ENCODE measurements at regions of chr6 and their contacts with region 1.

Region 1: GRCh38 chr6:161439093-161439492 is 165.2 kb upstream of the AGPAT4 start:
- DNase-seq: peak; percentile 48 to 88
- ATAC-seq: peak; percentile 37 to 85 (median 64)
- H3K4me3 ChIP-seq: peak overlapping the region in 7 of 10 donors; percentile 1 to 46 (median 37)
- H3K27ac ChIP-seq: peak overlapping the region in 8 of 10 donors; percentile 26 to 81 (median 68)
- H3K4me1 ChIP-seq: peaks cover 2 to 48% (median 22%) of the 10 kb centered on the region in 9 donors
- H3K27me3 ChIP-seq: no peaks in the 10 kb centered on the region
- CTCF ChIP-seq: no peak

Region 2: GRCh38 chr6:161482517-161482858 is 43.4 kb after region 1 on chr6:
- intact Hi-C with region 1: loop called in 2 of 10 experiments (anchors 5 kb)
- DNase-seq: no peak
- ATAC-seq: peak in 1 of 8 donors; percentile 29
- H3K4me3 ChIP-seq: no peak overlapping the region
- H3K27ac ChIP-seq: peak overlapping the region in 1 of 10 donors; percentile 23
- H3K4me1 ChIP-seq: peaks cover 0 to 36% (median 17%) of the 10 kb centered on the region in 9 donors
- H3K27me3 ChIP-seq: no peaks in the 10 kb centered on the region
- CTCF ChIP-seq: no peak

Region 3: DNA sequence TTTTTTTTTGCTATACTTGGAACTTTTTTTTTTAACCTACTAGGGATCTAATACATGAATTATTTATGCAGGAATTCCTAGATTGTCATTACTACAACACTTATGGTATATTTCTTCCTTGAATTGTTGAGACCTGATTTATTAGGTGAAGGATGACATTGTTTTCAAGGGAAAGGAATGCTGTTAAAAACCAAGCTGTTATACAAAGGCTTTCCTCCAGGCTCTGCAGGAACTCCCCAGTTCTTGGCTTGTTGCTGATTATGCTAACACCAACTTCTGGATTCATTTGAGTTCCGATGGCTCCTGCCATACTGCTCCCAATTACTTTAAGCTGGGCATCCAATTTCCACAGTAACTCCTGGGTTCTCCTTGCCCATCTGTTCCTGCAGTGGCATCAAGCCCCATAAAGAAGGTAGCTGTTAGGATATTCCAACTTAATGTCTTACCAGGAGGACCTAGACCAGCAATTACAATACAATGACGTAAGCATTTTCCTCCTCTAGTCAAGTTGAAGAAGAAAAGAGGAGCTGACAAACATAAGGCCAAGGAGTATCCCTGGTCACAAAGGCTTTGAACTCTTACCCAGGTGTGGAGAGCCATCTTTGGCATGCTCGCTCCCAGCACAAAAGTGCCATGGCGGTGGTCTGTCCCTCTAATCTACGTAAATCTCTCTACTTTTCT is 50.7 kb after region 1 on chr6:
- intact Hi-C with region 1: loop called in 2 of 10 experiments (anchors 5 kb)
- DNase-seq: no peak
- ATAC-seq: no peak
- H3K4me3 ChIP-seq: no peak overlapping the region
- H3K27ac ChIP-seq: no peak overlapping the region
- H3K4me1 ChIP-seq: peaks cover 0 to 6% (median 0%) of the 10 kb centered on the region in 9 donors
- H3K27me3 ChIP-seq: no peaks in the 10 kb centered on the region
- CTCF ChIP-seq: no peak

Measured in heart right ventricle (tissue), 16 donors.